Keratinocyte (primary cell): ENCODE measurements at regions of chr6 and their contacts with region 1.

Region 1: DNA sequence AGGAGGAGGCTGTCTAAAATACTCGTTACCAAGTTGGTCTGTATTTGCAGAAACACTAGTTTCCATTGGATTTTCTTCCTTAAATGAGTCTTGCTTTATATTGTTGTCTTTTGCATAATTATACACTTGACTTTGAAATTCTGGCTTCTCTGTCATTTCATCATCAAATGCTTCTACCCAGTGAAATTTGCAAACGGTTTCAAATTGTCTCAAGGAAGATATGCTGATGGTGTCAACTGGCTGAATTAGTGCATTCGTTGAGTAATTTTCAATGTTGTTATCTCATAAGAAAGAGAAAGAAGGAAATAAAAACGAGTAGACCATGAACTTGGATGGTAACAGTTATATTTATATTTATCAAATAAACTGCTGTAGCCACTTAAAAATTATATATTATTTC is 10.8 kb downstream of the CAGE1 start:
- DNase-seq: no peak
- H3K4me3 ChIP-seq: no peak overlapping the region
- H3K27ac ChIP-seq: no peak overlapping the region
- H3K4me1 ChIP-seq: peaks cover 4% of the 10 kb centered on the region
- H3K27me3 ChIP-seq: no peaks in the 10 kb centered on the region
- CTCF ChIP-seq: no peak

Region 2: DNA sequence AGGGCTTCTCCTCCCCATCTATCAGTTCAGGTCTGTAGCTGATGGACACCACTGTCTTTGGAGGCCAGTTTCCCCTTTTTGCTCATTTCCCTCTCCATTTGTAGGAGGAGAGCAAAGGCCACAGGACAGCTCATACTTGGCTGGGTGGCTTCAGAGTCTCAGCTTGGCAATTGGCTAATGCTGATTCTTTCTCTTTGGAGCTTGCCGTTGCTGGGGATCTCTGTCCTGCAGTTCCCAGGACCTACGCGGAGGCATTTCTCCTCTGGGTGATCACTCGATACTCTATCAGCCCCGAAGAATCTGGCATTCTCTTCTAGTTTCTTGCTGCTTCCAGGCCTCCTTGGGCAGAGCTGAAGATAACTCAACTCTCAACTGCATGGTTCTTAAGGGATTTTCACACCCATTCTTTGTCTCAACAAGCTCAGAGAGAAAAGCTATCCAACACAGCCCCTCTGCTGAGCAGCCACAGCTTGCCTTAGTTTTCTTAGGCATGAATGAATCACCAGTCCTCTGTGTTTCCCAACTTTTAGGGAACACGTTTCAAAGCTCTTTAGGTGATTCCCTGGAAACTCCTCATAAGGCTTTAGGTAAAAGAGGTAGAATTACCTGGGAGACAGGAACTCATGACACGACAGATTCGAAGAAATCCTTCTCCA is 46.5 kb before region 1 on chr6:
- dilution Hi-C with region 1: loop called (anchors 5 kb)
- DNase-seq: no peak
- H3K4me3 ChIP-seq: peak overlapping the region in 2 of 3 experiments; percentile 6 to 7
- H3K27ac ChIP-seq: peak overlapping the region; percentile 74
- H3K4me1 ChIP-seq: peaks cover 16% of the 10 kb centered on the region
- H3K27me3 ChIP-seq: no peaks in the 10 kb centered on the region
- CTCF ChIP-seq: no peak

Region 3: GRCh38 chr6:7615611-7616383 is 237.1 kb after region 1 on chr6:
- dilution Hi-C with region 1: no loop called
- DNase-seq: peak; percentile 7
- H3K4me3 ChIP-seq: peak overlapping the region in 1 of 3 experiments; percentile 46
- H3K27ac ChIP-seq: peak overlapping the region; percentile 29
- H3K4me1 ChIP-seq: peaks cover 17% of the 10 kb centered on the region
- H3K27me3 ChIP-seq: no peaks in the 10 kb centered on the region
- CTCF ChIP-seq: peak; percentile 68 to 72 (median 71)